ENCODE measurements at regions of chr9 and their contacts with region 1.

Region 1: GRCh38 chr9:107557231-107557990 is 67.8 kb upstream of the KLF4 start:
- DNase-seq: no peak
- H3K4me3 ChIP-seq: no peak overlapping the region
- H3K4me3 Mint-ChIP-seq: no peak overlapping the region
- H3K27ac Mint-ChIP-seq: no peak overlapping the region
- H3K4me1 ChIP-seq: peaks cover 35% of the 10 kb centered on the region
- H3K4me1 Mint-ChIP-seq: peaks cover 18% of the 10 kb centered on the region
- H3K27me3 ChIP-seq: no peaks in the 10 kb centered on the region
- H3K27me3 Mint-ChIP-seq: no peaks in the 10 kb centered on the region
- CTCF ChIP-seq: no peak

Region 2: DNA sequence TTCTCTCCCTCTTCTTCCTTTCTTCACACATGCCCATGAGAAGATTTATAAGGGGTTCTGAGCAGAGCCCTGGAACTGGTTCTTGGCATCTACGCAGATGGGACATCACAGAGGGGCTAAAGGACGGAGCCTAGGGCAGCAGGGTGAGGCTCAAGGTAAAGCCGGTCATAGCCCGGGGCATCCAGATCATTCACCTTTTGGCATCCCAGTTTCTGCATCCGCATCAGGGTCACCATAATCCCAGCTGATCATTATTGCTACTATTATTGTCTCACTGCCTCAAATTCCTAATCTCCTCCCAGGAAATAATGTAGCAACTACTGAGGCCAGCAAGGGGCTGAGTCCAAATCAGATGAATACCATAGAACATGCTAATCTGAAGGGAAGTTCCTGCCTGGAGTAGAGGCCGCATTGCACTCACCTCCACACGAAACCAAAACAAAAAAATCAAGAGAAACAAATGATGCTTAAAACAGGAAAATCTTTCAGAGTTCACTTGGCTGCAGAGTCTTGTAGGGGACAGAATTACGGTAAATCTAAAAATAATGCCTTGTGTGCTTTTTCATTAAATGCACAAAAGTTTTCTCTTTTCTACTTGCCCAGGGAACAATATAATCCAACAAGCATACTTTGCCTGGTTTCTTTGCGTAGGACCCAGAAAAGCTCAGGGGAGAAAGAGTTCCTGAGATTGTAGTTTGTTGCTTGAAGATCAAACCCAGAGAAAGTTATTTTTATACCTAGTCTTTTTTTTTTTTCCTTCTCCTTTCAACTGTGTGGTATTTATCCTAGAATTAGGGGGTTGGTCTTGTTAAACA is 19.8 kb after region 1 on chr9:
- CTCF ChIA-PET with region 1: no interaction called
- POLR2A ChIA-PET with region 1: interaction called, 12 read pairs
- intact Hi-C with region 1: no loop called
- DNase-seq: no peak
- H3K4me3 ChIP-seq: no peak overlapping the region
- H3K4me3 Mint-ChIP-seq: no peak overlapping the region
- H3K27ac Mint-ChIP-seq: no peak overlapping the region
- H3K4me1 ChIP-seq: no peaks in the 10 kb centered on the region
- H3K4me1 Mint-ChIP-seq: no peaks in the 10 kb centered on the region
- H3K27me3 ChIP-seq: no peaks in the 10 kb centered on the region
- H3K27me3 Mint-ChIP-seq: no peaks in the 10 kb centered on the region
- CTCF ChIP-seq: no peak

Measured in Caco-2 (cell line).